ENCODE measurements at regions of chr15 and their contacts with region 1.

Region 1: GRCh38 chr15:44738340-44738984 is 2.1 kb downstream of the TRIM69 start:
- DNase-seq: no peak
- ATAC-seq: no peak
- H3K4me3 Mint-ChIP-seq: no peak overlapping the region
- H3K27ac Mint-ChIP-seq: peak overlapping the region; percentile 39
- H3K4me1 Mint-ChIP-seq: peaks cover 53% of the 10 kb centered on the region
- H3K27me3 Mint-ChIP-seq: no peaks in the 10 kb centered on the region

Region 2: DNA sequence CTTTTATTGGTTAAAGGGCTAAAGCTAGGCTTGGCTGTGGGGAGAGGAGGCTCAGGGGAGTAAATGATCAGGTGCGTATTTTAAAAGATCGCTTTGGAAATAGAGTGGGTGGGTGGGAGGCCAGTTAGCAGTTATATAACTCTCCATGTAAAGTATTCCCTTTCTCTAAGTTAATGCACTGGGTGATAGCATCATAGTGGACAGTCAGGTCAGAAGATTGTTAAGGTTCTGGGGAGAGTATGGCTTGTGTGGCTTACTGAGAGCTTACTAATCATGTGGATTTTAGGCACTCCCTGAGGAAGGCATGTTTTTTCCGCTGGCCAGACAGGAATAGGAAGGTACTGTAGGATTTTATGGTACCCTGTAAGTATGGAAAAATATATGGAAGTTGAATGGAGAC is 207.8 kb before region 1 on chr15:
- CTCF ChIA-PET with region 1: no interaction called
- POLR2A ChIA-PET with region 1: no interaction called
- DNase-seq: no peak
- ATAC-seq: no peak
- H3K4me3 Mint-ChIP-seq: no peak overlapping the region
- H3K27ac Mint-ChIP-seq: peak overlapping the region; percentile 36
- H3K4me1 Mint-ChIP-seq: peaks cover 17% of the 10 kb centered on the region
- H3K27me3 Mint-ChIP-seq: no peaks in the 10 kb centered on the region

Region 3: DNA sequence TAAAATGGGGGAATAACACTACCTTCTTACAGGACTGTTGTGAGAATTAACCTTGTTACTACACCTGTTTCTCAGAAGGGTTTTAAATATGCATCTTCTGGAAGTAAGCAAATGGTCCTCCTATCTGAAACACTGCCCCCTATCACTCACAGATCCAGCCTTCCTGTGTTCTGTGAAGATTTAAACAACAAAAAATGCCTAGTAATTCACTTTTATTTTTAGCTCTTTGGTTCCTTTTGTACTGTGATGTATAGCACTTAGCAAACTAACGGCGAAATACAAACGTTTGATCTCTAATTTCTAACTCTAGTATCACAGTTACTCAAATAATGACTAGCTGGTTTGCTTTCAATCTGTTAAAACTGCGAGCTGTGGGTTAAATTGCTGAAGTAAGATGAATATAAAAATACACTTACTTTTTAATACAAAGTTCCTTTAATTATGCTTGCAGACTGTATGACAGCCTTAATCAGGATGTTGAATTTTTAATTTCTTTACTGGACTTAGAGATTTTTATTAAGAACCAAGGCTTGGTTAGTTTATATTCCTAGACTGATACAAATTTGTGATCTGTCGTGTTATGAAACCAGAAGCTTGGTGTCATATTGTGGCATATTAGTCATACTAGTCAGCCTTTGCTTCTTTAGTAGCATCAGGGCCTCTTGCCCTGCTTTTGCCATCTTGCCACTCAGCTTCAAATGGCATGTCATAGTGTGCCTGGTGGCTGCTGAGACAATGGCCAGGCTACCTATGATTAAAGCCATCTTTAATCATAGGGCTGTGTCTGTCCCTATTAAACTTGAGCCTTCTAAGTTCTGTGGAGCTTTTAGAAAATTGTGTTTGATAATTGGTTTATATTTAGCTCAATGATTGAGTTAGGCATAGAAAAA is 192.3 kb before region 1 on chr15:
- CTCF ChIA-PET with region 1: interaction called, 24 read pairs
- POLR2A ChIA-PET with region 1: interaction called, 5 read pairs
- DNase-seq: peak; percentile 44
- ATAC-seq: peak; percentile 77
- H3K4me3 Mint-ChIP-seq: peak overlapping the region; percentile 32
- H3K27ac Mint-ChIP-seq: peak overlapping the region; percentile 83
- H3K4me1 Mint-ChIP-seq: peaks cover 41% of the 10 kb centered on the region
- H3K27me3 Mint-ChIP-seq: no peaks in the 10 kb centered on the region

Region 4: GRCh38 chr15:44593042-44593736 is 145.3 kb before region 1 on chr15:
- CTCF ChIA-PET with region 1: interaction called, 88 read pairs
- POLR2A ChIA-PET with region 1: interaction called, 3 read pairs
- DNase-seq: peak; percentile 36
- ATAC-seq: peak; percentile 82
- H3K4me3 Mint-ChIP-seq: no peak overlapping the region
- H3K27ac Mint-ChIP-seq: peak overlapping the region; percentile 27
- H3K4me1 Mint-ChIP-seq: peaks cover 26% of the 10 kb centered on the region
- H3K27me3 Mint-ChIP-seq: no peaks in the 10 kb centered on the region

Region 5: DNA sequence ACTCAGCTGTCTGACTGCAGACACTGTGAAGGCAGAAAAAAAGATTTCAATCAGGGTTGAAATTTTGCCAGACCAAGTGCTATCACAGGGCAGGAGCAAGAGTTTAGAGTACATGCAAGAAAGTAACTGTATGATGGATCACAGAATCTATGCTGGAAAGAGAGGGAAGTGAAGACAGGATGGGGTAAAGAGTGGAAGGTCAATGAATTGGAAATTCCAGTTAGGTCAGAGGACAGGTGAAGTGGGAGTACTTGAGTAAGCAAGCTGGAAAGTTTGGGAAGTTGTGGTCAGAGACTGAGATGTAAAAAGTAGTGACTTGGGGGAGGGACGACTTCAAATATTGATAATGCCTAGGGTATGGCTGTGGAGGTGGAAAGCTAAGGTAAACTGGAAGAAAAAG is 82.2 kb before region 1 on chr15:
- CTCF ChIA-PET with region 1: interaction called, 218 read pairs
- POLR2A ChIA-PET with region 1: interaction called, 3 read pairs
- DNase-seq: no peak
- ATAC-seq: no peak
- H3K4me3 Mint-ChIP-seq: no peak overlapping the region
- H3K27ac Mint-ChIP-seq: no peak overlapping the region
- H3K4me1 Mint-ChIP-seq: peaks cover 12% of the 10 kb centered on the region
- H3K27me3 Mint-ChIP-seq: no peaks in the 10 kb centered on the region

Region 6: GRCh38 chr15:44676676-44677075 is 61.8 kb before region 1 on chr15:
- CTCF ChIA-PET with region 1: interaction called, 22 read pairs
- POLR2A ChIA-PET with region 1: interaction called, 22 read pairs
- DNase-seq: peak; percentile 61
- ATAC-seq: peak; percentile 48
- H3K4me3 Mint-ChIP-seq: peak overlapping the region; percentile 70
- H3K27ac Mint-ChIP-seq: peak overlapping the region; percentile 95
- H3K4me1 Mint-ChIP-seq: peaks cover 82% of the 10 kb centered on the region
- H3K27me3 Mint-ChIP-seq: no peaks in the 10 kb centered on the region

Region 7: DNA sequence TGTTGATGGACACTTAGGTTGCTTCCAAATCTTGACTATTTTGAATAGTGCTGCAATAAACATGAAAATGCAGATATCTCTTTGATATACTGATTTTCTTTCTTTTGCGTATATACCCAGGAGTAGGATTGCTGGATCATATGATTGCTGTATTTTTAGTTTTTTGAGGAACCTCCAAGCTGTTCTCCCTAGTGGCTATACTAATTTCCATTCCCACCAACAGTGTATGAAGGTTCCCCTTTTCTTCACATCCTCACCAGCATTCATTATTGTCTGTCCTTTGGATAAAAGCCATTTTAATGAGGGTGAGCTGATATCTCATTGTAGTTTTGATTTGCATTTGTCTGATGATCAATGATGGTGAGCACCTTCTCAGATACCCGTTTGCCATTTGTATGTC is 39.8 kb before region 1 on chr15:
- CTCF ChIA-PET with region 1: interaction called, 10 read pairs
- POLR2A ChIA-PET with region 1: no interaction called
- DNase-seq: no peak
- ATAC-seq: no peak
- H3K4me3 Mint-ChIP-seq: no peak overlapping the region
- H3K27ac Mint-ChIP-seq: no peak overlapping the region
- H3K4me1 Mint-ChIP-seq: peaks cover 20% of the 10 kb centered on the region
- H3K27me3 Mint-ChIP-seq: peaks cover 1% of the 10 kb centered on the region